ENCODE measurements at regions of chr1 and their contacts with region 1.

Region 1: DNA sequence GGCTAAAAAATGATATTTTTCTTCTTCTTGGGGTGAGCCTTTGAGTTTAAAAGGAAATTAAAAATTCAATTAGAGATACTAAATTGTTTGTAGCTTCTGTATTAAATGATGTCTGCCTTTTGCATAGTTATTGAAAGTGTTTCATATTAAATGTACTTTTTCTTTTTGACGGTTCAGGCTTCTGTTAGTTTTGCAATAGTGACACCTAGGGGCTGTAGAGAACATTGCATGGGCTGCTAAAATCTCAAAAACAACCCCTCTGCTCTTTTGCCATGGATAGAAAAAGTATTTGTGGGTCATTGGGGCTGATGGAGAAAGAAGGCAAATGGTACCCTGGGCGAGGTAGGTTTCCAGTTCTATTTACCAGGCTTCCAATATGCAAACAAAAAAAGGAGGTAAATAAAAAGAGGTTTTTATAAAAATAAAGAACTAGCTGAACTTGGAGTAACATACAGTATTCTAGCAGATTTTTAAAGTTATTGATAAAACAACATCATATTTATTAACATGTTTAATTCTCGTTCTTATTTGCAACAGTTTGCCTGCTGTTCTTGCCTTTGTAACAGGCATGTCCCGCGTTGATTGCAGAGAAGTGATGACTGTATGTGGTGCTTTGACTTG is 115.4 kb upstream of the HOOK1 start:
- DNase-seq: no peak
- ATAC-seq: peak; percentile 49
- H3K4me3 Mint-ChIP-seq: no peak overlapping the region
- H3K27ac Mint-ChIP-seq: peak overlapping the region; percentile 50
- H3K4me1 Mint-ChIP-seq: peaks cover 30% of the 10 kb centered on the region
- H3K27me3 Mint-ChIP-seq: no peaks in the 10 kb centered on the region
- CTCF ChIP-seq: peak; percentile 50

Region 2: DNA sequence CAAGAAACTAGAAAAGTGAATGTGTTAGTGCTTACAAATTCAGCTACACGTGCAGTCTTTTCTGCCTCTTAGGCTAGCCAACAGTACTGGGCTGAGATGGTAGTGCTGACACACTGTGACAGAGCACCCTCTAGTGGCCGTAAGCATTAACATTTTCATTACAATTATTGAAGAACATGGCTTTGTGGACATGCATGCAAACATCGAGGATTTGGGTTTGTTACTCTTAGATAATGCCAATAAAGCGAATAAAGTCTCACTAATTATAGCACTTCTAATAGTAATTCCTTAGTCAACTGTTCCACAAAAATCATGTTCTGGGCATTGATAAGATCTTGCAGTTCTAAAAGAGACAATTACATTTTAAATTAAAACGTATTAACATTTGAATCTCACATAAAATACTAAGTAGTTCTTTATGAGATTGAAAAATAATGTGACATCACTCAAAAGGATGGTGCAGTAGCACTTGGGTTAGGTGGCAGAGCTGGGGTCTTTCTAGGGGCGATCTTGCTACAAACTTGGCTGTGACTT is 1046.6 kb before region 1 on chr1:
- CTCF ChIA-PET with region 1: no interaction called
- POLR2A ChIA-PET with region 1: no interaction called
- intact Hi-C with region 1: loop called (anchors 5 kb)
- DNase-seq: no peak
- ATAC-seq: peak; percentile 75
- H3K4me3 Mint-ChIP-seq: no peak overlapping the region
- H3K27ac Mint-ChIP-seq: no peak overlapping the region
- H3K4me1 Mint-ChIP-seq: peaks cover 3% of the 10 kb centered on the region
- H3K27me3 Mint-ChIP-seq: no peaks in the 10 kb centered on the region
- CTCF ChIP-seq: peak; percentile 68

Region 3: DNA sequence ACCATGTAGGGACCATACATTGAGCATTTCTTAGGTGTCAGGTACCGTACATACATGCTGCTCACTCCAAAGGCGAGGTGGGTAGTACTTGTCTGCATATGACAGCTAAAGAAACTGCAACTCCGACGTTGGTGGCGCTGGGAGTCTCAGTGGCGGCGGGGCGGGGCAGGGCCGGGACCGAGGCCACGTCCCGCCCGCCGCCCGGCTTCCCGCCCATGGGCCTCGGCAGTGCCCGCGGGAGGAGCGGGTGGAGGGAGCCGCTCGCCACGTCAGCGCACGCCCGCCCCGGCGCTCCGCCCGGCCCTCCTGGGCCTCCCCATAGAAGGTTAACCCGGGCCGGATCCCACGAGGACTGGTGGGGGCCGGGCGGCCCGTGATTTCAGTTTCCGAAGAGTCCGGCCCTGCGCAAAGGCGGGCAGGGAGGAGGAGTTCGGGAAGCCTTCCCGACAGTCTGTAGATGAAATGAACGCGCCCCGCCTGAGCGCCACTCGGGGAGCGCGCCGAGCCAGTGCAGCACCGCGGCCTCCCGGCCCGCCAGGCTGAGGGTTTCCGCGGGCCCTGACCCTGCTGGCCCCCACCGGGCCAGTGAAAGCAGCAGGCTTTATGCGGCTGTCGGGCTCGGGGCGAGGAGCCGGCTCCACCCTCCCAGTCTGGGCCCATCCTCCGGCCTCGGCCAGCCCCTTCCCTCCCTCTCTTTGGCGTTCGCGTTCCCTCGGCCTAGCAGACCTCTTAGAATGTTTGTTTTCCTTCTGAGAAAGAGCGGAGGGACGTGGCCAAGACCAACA is 795.6 kb before region 1 on chr1:
- CTCF ChIA-PET with region 1: interaction called, 5 read pairs
- POLR2A ChIA-PET with region 1: interaction called, 3 read pairs
- intact Hi-C with region 1: loop called (anchors 2 kb)
- DNase-seq: peak; percentile 75
- ATAC-seq: peak; percentile 90
- H3K4me3 Mint-ChIP-seq: peak overlapping the region; percentile 84
- H3K27ac Mint-ChIP-seq: peak overlapping the region; percentile 81
- H3K4me1 Mint-ChIP-seq: peaks cover 16% of the 10 kb centered on the region
- H3K27me3 Mint-ChIP-seq: no peaks in the 10 kb centered on the region
- CTCF ChIP-seq: no peak

Region 4: GRCh38 chr1:59046730-59047157 is 652.6 kb before region 1 on chr1:
- CTCF ChIA-PET with region 1: interaction called, 11 read pairs
- POLR2A ChIA-PET with region 1: interaction called, 4 read pairs
- intact Hi-C with region 1: loop called (anchors 1 kb)
- DNase-seq: peak; percentile 22
- ATAC-seq: peak; percentile 96
- H3K4me3 Mint-ChIP-seq: no peak overlapping the region
- H3K27ac Mint-ChIP-seq: peak overlapping the region; percentile 91
- H3K4me1 Mint-ChIP-seq: peaks cover 31% of the 10 kb centered on the region
- H3K27me3 Mint-ChIP-seq: no peaks in the 10 kb centered on the region
- CTCF ChIP-seq: no peak

Region 5: GRCh38 chr1:59272507-59272906 is 426.8 kb before region 1 on chr1:
- CTCF ChIA-PET with region 1: no interaction called
- POLR2A ChIA-PET with region 1: no interaction called
- intact Hi-C with region 1: loop called (anchors 1 kb)
- DNase-seq: no peak
- ATAC-seq: peak; percentile 94
- H3K4me3 Mint-ChIP-seq: peak overlapping the region; percentile 57
- H3K27ac Mint-ChIP-seq: peak overlapping the region; percentile 84
- H3K4me1 Mint-ChIP-seq: peaks cover 57% of the 10 kb centered on the region
- H3K27me3 Mint-ChIP-seq: no peaks in the 10 kb centered on the region
- CTCF ChIP-seq: no peak

Region 6: DNA sequence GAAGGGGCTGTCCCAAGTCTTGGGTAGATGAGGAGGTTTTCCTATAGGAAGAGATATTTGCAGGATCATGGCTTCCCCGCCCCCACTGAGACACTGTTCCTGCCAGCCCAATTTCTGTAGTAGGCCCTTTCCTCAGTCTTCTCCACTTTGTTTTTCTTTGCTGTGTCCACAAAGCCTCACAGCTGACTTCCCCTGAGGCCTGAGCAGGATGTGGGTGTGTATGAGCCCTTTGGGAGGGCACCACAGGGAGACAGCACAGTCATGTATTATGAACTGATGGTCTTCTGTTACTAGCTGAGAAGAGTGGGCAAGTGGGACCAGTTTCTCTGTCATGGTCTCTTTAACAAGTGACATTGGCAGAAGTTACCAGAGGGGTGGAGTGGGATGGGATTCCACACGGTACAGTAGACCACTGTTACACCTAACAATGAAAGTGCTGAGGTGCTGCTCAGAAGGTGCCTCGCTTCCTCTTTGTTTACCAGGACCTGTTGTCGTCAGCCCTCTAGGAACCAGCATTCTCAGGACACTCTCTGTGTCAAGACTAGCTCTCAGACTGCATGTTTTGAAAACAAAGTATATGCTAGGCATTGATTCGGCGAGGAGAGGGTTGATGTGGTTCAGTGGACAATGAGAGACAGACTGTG is 138.4 kb before region 1 on chr1:
- CTCF ChIA-PET with region 1: interaction called, 6 read pairs
- POLR2A ChIA-PET with region 1: no interaction called
- intact Hi-C with region 1: loop called (anchors 2 kb)
- DNase-seq: no peak
- ATAC-seq: peak; percentile 93
- H3K4me3 Mint-ChIP-seq: peak overlapping the region; percentile 42
- H3K27ac Mint-ChIP-seq: peak overlapping the region; percentile 80
- H3K4me1 Mint-ChIP-seq: peaks cover 44% of the 10 kb centered on the region
- H3K27me3 Mint-ChIP-seq: no peaks in the 10 kb centered on the region
- CTCF ChIP-seq: no peak

Region 7: DNA sequence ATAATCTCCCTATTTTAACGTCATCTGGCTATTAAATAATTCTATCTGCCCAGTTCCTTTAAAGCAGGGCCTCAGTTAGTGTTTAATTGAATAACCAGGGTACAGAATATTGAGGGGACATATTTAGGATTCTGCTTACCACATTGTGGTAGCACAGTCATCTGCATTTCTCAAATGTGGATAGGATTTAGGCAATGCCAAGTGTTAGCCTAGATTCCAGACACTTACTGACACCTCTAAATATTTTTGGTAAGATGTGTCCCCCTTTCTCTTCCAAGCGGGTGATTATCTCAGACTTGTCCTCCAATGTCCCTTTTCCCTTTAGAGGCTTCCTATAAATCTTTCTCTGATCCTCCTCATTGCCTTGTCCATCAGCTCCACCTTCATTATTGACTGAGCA is 45.4 kb before region 1 on chr1:
- CTCF ChIA-PET with region 1: no interaction called
- POLR2A ChIA-PET with region 1: no interaction called
- intact Hi-C with region 1: no loop called
- DNase-seq: no peak
- ATAC-seq: no peak
- H3K4me3 Mint-ChIP-seq: no peak overlapping the region
- H3K27ac Mint-ChIP-seq: no peak overlapping the region
- H3K4me1 Mint-ChIP-seq: no peaks in the 10 kb centered on the region
- H3K27me3 Mint-ChIP-seq: no peaks in the 10 kb centered on the region
- CTCF ChIP-seq: no peak

Region 8: GRCh38 chr1:59845091-59845490 is 145.8 kb after region 1 on chr1:
- CTCF ChIA-PET with region 1: no interaction called
- POLR2A ChIA-PET with region 1: no interaction called
- intact Hi-C with region 1: no loop called
- DNase-seq: no peak
- ATAC-seq: no peak
- H3K4me3 Mint-ChIP-seq: no peak overlapping the region
- H3K27ac Mint-ChIP-seq: no peak overlapping the region
- H3K4me1 Mint-ChIP-seq: no peaks in the 10 kb centered on the region
- H3K27me3 Mint-ChIP-seq: no peaks in the 10 kb centered on the region
- CTCF ChIP-seq: no peak

Measured in activated B cell treated with CpG ODN at 0.5 μM for 24 hours (primary cell).